ENCODE measurements at regions of chr3 and their contacts with region 1.

Region 1: GRCh38 chr3:192566706-192567290 is 160.5 kb downstream of the FGF12 start:
- DNase-seq: peak; percentile 58
- H3K4me3 ChIP-seq: no peak overlapping the region; a peak in 1 of 4 replicates
- H3K27ac ChIP-seq: no peak overlapping the region
- H3K4me1 ChIP-seq: peaks cover 0 to 3% of the 10 kb centered on the region in 2 experiments; a peak in 1 of 4 replicates
- H3K27me3 ChIP-seq: peaks cover 10% of the 10 kb centered on the region; the same call in 1 of the 2 replicates
- CTCF ChIP-seq: peak; percentile 77
- EP300 ChIP-seq: no peak
- RAD21 ChIP-seq: peak; percentile 94

Region 2: DNA sequence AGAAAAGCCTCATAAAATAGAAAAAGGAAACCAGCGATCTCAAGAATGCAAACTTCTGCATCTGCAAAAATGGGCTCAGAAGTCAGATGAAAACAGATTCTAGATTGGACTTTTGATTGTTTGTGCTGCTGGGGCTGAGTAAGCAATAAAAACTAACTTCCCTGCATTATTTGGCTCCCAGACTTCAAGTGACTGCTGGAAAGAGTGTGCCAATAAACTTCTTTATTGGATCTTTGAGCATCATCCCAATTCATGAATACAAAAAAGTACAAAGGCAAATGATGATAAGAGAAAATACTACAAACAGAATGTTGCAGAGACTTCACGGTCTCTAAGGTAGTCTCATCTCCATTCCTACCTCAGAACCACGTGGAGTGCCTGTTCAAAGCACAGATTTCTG is 62.6 kb after region 1 on chr3:
- CTCF ChIA-PET with region 1: no interaction called
- POLR2A ChIA-PET with region 1: no interaction called
- DNase-seq: no peak
- H3K4me3 ChIP-seq: no peak overlapping the region
- H3K27ac ChIP-seq: no peak overlapping the region
- H3K4me1 ChIP-seq: no peaks in the 10 kb centered on the region
- H3K27me3 ChIP-seq: no peaks in the 10 kb centered on the region
- CTCF ChIP-seq: no peak
- EP300 ChIP-seq: no peak
- RAD21 ChIP-seq: no peak

Region 3: DNA sequence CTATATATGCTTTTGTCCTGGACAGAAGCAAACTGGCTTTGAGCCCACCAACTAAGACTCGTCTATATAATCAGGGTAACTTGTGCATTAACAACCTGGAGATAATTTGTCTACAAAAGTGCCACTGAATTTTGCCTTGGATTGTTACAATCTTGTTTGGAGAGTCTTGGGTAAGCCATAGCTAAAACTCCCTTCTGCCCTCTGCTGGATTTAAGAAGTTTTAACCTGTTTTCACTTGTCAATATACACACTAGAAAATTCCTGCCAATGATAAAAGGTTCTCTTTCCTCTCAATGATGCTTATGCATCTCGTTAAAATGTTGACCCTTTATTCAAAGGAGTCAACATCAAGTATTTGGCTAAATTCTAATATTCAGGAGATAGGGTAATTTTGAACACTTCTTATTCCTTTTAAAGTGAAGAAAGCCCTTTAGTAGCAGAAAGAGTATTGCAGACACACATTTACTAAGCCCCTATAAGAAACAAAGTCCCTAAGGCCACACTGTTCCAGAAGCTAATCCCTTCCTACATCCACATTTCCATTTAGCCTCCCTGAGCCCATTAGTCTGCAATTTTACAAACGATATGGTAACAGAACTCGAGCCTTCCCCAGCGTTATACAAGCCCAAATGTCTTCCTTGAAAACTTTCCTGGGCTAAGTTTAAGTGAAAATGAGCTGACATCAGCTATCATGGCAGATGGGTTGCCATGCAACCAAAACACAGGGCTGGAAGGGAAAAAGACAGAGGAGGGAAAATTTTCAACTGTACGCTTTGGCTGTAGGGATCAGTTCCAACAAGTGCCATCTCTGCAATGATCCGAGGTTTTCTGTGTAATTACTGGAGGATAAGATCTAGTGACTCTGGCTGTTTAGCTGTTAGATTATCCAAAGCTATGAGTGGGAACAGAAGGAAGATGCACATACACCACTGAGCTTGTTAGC is 236.4 kb after region 1 on chr3:
- CTCF ChIA-PET with region 1: interaction called, 46 read pairs
- POLR2A ChIA-PET with region 1: no interaction called
- DNase-seq: peak; percentile 42
- H3K4me3 ChIP-seq: no peak overlapping the region
- H3K27ac ChIP-seq: no peak overlapping the region
- H3K4me1 ChIP-seq: peaks cover 0 to 3% of the 10 kb centered on the region in 2 experiments; a peak in 1 of 4 replicates
- H3K27me3 ChIP-seq: no peaks in the 10 kb centered on the region
- CTCF ChIP-seq: peak; percentile 69
- EP300 ChIP-seq: no peak
- RAD21 ChIP-seq: peak; percentile 55